T-cell (primary cell): ENCODE measurements at regions of chr9 and their contacts with region 1.

Region 1: DNA sequence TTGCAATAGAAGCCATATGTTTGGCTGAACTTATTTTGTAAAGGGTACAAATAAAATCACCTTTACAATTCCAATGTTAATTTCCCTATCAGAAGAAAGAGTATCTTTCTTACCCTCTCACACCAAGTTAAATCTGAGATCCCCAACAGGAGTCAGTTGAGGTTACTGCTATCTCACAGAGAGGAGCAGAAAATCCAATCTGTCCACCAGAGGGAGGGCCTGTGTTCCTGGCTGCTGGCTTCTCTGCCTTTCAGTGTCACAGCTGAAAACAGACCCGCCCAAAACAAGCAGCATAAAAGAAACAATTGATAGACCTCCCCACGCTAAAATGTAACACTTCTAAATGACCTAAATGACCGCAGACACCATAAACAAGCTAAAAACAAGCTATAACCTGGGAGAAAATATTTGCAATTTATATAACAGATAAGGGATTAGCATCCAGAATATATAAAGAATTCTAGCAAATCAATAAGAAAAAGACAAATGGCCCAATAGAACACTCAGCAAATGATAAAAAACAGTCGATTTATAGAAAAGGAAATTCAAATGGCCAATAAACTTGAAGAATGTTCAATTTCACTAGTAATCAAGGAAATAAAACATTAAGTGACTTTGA is 24.5 kb upstream of the MVB12B start:
- DNase-seq: peak in 34 of 35 experiments; percentile 7 to 77 (median 54)
- ATAC-seq: peak in 3 of 4 experiments; percentile 71 to 81 (median 81)
- H3K4me3 ChIP-seq: no peak overlapping the region
- H3K4me3 Mint-ChIP-seq: no peak overlapping the region
- H3K27ac ChIP-seq: no peak overlapping the region
- H3K27ac Mint-ChIP-seq: no peak overlapping the region
- H3K4me1 ChIP-seq: no peaks in the 10 kb centered on the region
- H3K4me1 Mint-ChIP-seq: peaks cover 4 to 6% (median 5%) of the 10 kb centered on the region in 3 donors
- H3K27me3 ChIP-seq: no peaks in the 10 kb centered on the region
- H3K27me3 Mint-ChIP-seq: peaks cover 3 to 4% of the 10 kb centered on the region in 2 donors

Region 2: DNA sequence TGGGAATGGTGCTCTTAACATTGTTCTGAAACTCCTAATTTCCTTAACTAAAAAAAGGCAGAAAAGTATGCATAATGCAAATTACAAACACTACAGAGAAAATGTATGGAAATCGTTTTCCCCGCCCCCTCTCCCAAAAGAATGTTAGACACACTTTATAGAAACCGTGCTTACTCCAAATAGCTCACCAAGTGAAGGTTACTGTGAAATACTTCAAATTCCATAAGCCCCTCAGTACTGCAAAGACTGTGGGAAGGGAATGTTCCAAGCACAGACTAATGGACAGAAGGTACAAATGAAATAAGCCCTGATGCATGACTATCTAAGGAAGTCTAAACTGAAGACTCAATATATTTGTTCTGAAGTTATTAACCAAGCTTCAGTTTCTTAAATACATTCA is 607.6 kb before region 1 on chr9:
- CTCF ChIA-PET with region 1: no interaction called
- POLR2A ChIA-PET with region 1: no interaction called
- DNase-seq: no peak
- ATAC-seq: no peak
- H3K4me3 ChIP-seq: no peak overlapping the region
- H3K4me3 Mint-ChIP-seq: no peak overlapping the region
- H3K27ac ChIP-seq: no peak overlapping the region
- H3K27ac Mint-ChIP-seq: no peak overlapping the region
- H3K4me1 ChIP-seq: no peaks in the 10 kb centered on the region
- H3K4me1 Mint-ChIP-seq: peaks cover 38 to 46% (median 39%) of the 10 kb centered on the region in 3 donors
- H3K27me3 ChIP-seq: no peaks in the 10 kb centered on the region
- H3K27me3 Mint-ChIP-seq: no peaks in the 10 kb centered on the region

Region 3: GRCh38 chr9:126490871-126491567 is 188.9 kb after region 1 on chr9:
- CTCF ChIA-PET with region 1: interaction called, 7 to 21 read pairs
- POLR2A ChIA-PET with region 1: no interaction called
- DNase-seq: peak in 25 of 35 experiments; percentile 27 to 87 (median 47)
- ATAC-seq: peak; percentile 44 to 61 (median 51)
- H3K4me3 ChIP-seq: no peak overlapping the region
- H3K4me3 Mint-ChIP-seq: peak overlapping the region in 1 of 3 donors; percentile 11
- H3K27ac ChIP-seq: no peak overlapping the region
- H3K27ac Mint-ChIP-seq: no peak overlapping the region
- H3K4me1 ChIP-seq: peaks cover 0 to 9% of the 10 kb centered on the region in 2 experiments
- H3K4me1 Mint-ChIP-seq: peaks cover 6 to 14% (median 13%) of the 10 kb centered on the region in 3 donors
- H3K27me3 ChIP-seq: no peaks in the 10 kb centered on the region
- H3K27me3 Mint-ChIP-seq: no peaks in the 10 kb centered on the region

Region 4: GRCh38 chr9:127877566-127877998 is 1575.5 kb after region 1 on chr9 and contains the start of gene AK1:
- CTCF ChIA-PET with region 1: no interaction called
- POLR2A ChIA-PET with region 1: no interaction called
- DNase-seq: no peak
- ATAC-seq: peak in 1 of 4 experiments; percentile 24
- H3K4me3 ChIP-seq: no peak within 1 kb of the TSS
- H3K4me3 Mint-ChIP-seq: peak within 1 kb of the TSS in 2 of 3 donors; percentile 6 to 43
- H3K27ac ChIP-seq: no peak within 1 kb of the TSS
- H3K27ac Mint-ChIP-seq: no peak within 1 kb of the TSS
- H3K4me1 ChIP-seq: peaks cover 0 to 11% of the 10 kb centered on the region in 2 experiments
- H3K4me1 Mint-ChIP-seq: peaks cover 10 to 16% (median 15%) of the 10 kb centered on the region in 3 donors
- H3K27me3 ChIP-seq: peaks cover 0 to 25% of the 10 kb centered on the region in 2 experiments
- H3K27me3 Mint-ChIP-seq: peaks cover 0 to 4% of the 10 kb centered on the region in 2 donors
- total RNA-seq, gene AK1: 40.5 to 54.9 (median 50.4) TPM